Naive thymus-derived CD4-positive, alpha-beta T cell (primary cell): ENCODE measurements at regions of chr12 and their contacts with region 1.

Region 1: GRCh38 chr12:90013409-90013808 is 304.8 kb upstream of the ATP2B1 start:
- DNase-seq: peak in 2 of 9 donors; percentile 8 to 16
- ATAC-seq: peak; percentile 60
- H3K4me3 ChIP-seq: no peak overlapping the region
- H3K4me3 Mint-ChIP-seq: no peak overlapping the region
- H3K27ac ChIP-seq: no peak overlapping the region
- H3K27ac Mint-ChIP-seq: no peak overlapping the region
- H3K4me1 ChIP-seq: no peaks in the 10 kb centered on the region
- H3K4me1 Mint-ChIP-seq: peaks cover 0 to 2% (median 0%) of the 10 kb centered on the region in 7 donors
- H3K27me3 ChIP-seq: no peaks in the 10 kb centered on the region
- H3K27me3 Mint-ChIP-seq: peaks cover 0 to 3% (median 0%) of the 10 kb centered on the region in 5 donors

Region 2: DNA sequence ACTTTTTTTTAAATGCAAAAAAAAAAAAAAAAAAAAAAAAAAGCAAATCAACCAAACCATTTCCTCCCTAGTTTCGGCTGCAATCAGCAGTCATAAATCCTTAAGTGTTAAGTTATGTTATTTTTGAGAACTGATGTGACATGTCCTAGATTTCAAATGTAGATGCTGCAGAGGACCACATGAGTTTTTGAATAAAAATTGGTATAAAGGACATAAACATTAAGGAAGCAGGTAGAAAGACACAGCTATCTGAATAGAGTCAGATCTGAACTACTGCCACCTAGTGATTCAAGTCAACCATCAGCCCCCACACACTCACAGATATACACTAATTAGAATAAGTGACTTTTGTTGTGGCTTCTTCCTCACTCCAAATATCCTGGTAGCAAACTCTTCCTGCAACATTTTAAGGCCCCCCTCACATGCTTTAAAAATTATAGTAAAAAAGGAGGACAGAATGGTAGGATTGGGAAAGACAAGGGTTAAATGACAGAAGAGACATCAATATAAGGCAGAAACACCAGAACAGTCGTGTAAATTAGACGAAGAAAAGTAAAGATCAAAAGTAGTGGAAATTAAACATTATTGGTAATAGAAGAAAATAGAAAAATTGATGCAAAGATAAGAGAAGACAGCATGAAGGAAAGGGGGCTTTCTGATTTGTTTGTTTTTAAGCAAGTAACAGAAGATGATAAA is 89.7 kb after region 1 on chr12:
- CTCF ChIA-PET with region 1: no interaction called
- POLR2A ChIA-PET with region 1: no interaction called
- intact Hi-C with region 1: loop called in 1 of 2 experiments (anchors 1 kb)
- DNase-seq: peak in 6 of 9 donors; percentile 17 to 56 (median 44)
- ATAC-seq: peak; percentile 79
- H3K4me3 ChIP-seq: no peak overlapping the region
- H3K4me3 Mint-ChIP-seq: peak overlapping the region in 8 of 10 donors; percentile 47 to 75 (median 70)
- H3K27ac ChIP-seq: no peak overlapping the region
- H3K27ac Mint-ChIP-seq: peak overlapping the region in 4 of 9 donors; percentile 38 to 63 (median 48)
- H3K4me1 ChIP-seq: no peaks in the 10 kb centered on the region
- H3K4me1 Mint-ChIP-seq: peaks cover 4 to 12% (median 6%) of the 10 kb centered on the region in 7 donors
- H3K27me3 ChIP-seq: no peaks in the 10 kb centered on the region
- H3K27me3 Mint-ChIP-seq: peaks cover 4 to 15% (median 11%) of the 10 kb centered on the region in 5 donors

Region 3: GRCh38 chr12:90229407-90230170 is 216.2 kb after region 1 on chr12:
- CTCF ChIA-PET with region 1: no interaction called
- POLR2A ChIA-PET with region 1: no interaction called
- intact Hi-C with region 1: no loop called
- DNase-seq: no peak
- ATAC-seq: no peak
- H3K4me3 ChIP-seq: no peak overlapping the region
- H3K4me3 Mint-ChIP-seq: no peak overlapping the region
- H3K27ac ChIP-seq: no peak overlapping the region
- H3K27ac Mint-ChIP-seq: no peak overlapping the region
- H3K4me1 ChIP-seq: no peaks in the 10 kb centered on the region
- H3K4me1 Mint-ChIP-seq: no peaks in the 10 kb centered on the region
- H3K27me3 ChIP-seq: no peaks in the 10 kb centered on the region
- H3K27me3 Mint-ChIP-seq: peaks cover 0 to 26% (median 11%) of the 10 kb centered on the region in 5 donors